ENCODE measurements at regions of chr2 and their contacts with region 1.

Region 1: GRCh38 chr2:160679686-160680085 is 186.1 kb upstream of the RBMS1 start:
- DNase-seq: no peak
- ATAC-seq: no peak
- H3K4me3 ChIP-seq: no peak overlapping the region
- H3K27ac ChIP-seq: no peak overlapping the region
- H3K4me1 ChIP-seq: no peaks in the 10 kb centered on the region
- H3K27me3 ChIP-seq: no peaks in the 10 kb centered on the region
- CTCF ChIP-seq: no peak

Region 2: GRCh38 chr2:160647967-160648685 is 31.6 kb before region 1 on chr2:
- intact Hi-C with region 1: loop called in 1 of 10 experiments (anchors 2 kb)
- DNase-seq: peak in 1 of 2 donors; percentile 11
- ATAC-seq: peak in 5 of 8 donors; percentile 18 to 66 (median 37)
- H3K4me3 ChIP-seq: peak overlapping the region in 6 of 10 donors; percentile 2 to 39 (median 24)
- H3K27ac ChIP-seq: no peak overlapping the region
- H3K4me1 ChIP-seq: peaks cover 0 to 34% (median 6%) of the 10 kb centered on the region in 9 donors
- H3K27me3 ChIP-seq: no peaks in the 10 kb centered on the region
- CTCF ChIP-seq: no peak

Region 3: GRCh38 chr2:160742679-160743078 is 63.0 kb after region 1 on chr2:
- intact Hi-C with region 1: no loop called
- DNase-seq: no peak
- ATAC-seq: peak in 1 of 8 donors; percentile 61
- H3K4me3 ChIP-seq: no peak overlapping the region
- H3K27ac ChIP-seq: no peak overlapping the region
- H3K4me1 ChIP-seq: peaks cover 0 to 3% (median 0%) of the 10 kb centered on the region in 9 donors
- H3K27me3 ChIP-seq: no peaks in the 10 kb centered on the region
- CTCF ChIP-seq: no peak